HEK293T (cell line): ENCODE measurements at regions of chr1 and their contacts with region 1.

Region 1: DNA sequence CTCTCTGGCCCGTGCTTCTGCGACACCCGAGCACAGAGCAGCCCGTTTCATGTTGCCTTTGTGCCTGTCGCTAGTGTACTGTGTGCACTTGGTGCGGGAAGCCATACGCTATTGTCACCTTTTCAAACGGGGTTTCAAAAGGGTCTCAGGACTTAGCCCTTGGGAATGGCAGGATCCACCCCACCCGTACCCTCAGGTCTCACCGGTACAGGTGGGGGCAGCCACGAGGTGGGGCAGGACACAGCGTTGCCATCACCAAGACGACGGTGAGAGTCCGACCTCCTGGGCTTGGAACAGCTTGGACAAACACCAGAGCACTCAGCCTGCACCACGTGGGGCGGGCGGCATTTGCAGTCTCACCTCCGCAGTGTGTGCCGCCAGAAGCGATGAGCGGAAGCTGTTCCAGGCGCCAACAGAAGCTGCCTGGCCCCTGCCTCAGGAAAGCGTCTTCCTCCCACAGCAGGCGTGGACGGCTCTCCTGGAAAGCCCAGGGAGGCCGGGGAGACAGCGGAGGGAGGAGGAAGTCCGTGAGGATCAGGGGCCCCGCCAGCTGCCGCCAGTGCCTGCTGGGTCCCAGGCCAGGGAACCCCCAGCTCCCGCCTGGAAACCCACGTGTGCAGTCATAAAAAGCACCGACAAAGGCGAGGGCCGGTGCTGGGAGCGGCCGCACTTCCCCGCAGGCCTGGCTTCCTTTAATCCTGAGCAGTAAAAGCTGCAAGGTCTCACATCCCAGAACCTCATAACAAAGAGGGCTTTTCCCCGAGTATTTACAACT is 131.3 kb upstream of the ARHGEF16 start:
- DNase-seq: peak; percentile 38

Region 2: GRCh38 chr1:3312898-3313575 is 10.2 kb before region 1 on chr1:
- CTCF ChIA-PET with region 1: no interaction called
- POLR2A ChIA-PET with region 1: interaction called, 19 read pairs
- DNase-seq: peak; percentile 75

Region 3: GRCh38 chr1:3352299-3352951 is 29.2 kb after region 1 on chr1:
- CTCF ChIA-PET with region 1: interaction called, 6 read pairs
- POLR2A ChIA-PET with region 1: interaction called, 12 read pairs
- DNase-seq: peak; percentile 74